PC-9 (cell line): ENCODE measurements at regions of chr3 and their contacts with region 1.

Region 1: GRCh38 chr3:157201648-157202278 is 41.8 kb upstream of the CCNL1 start:
- DNase-seq: peak in 1 of 2 experiments; percentile 68
- H3K4me3 ChIP-seq: no peak overlapping the region
- H3K27ac ChIP-seq: no peak overlapping the region
- H3K4me1 ChIP-seq: no peaks in the 10 kb centered on the region
- H3K27me3 ChIP-seq: no peaks in the 10 kb centered on the region
- CTCF ChIP-seq: peak; percentile 71

Region 2: GRCh38 chr3:155753036-155753639 is 1448.6 kb before region 1 on chr3:
- CTCF ChIA-PET with region 1: no interaction called
- POLR2A ChIA-PET with region 1: interaction called, 3 read pairs
- intact Hi-C with region 1: loop called (anchors 5 kb)
- DNase-seq: no peak
- H3K4me3 ChIP-seq: no peak overlapping the region
- H3K27ac ChIP-seq: no peak overlapping the region
- H3K4me1 ChIP-seq: peaks cover 14% of the 10 kb centered on the region
- H3K27me3 ChIP-seq: no peaks in the 10 kb centered on the region
- CTCF ChIP-seq: peak; percentile 76

Region 3: DNA sequence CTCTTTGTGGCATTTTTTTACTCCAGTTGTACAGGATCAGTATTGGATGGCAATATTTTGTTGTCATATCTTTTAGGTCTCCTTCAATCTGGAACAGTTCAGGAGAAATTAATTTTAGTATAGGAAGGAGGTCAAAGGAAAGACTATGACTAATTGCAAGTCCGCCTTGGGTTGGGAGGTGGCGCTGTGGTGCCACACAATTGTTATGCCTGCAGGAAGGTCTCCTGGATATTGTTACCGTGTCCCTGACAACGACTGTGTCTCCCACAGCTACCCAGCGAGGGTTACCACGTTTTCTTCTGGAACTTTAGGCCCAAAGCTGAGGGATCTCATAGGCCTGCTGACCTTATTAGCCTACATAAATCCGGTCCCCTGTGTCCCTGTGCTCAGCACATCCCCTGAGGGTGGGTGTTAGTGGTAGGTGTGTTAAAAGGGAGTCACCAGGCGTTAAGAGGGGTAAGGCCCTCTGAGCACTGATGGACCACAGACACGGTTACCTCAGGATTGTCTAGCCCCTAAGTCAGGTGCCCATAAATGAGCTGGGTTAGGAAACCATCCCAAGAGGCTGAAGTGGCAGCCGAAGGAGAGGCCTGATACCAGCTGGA is 1049.8 kb before region 1 on chr3:
- CTCF ChIA-PET with region 1: interaction called, 7 read pairs
- POLR2A ChIA-PET with region 1: no interaction called
- intact Hi-C with region 1: loop called (anchors 1 kb)
- DNase-seq: peak; percentile 49 to 62
- H3K4me3 ChIP-seq: no peak overlapping the region
- H3K27ac ChIP-seq: no peak overlapping the region
- H3K4me1 ChIP-seq: no peaks in the 10 kb centered on the region
- H3K27me3 ChIP-seq: no peaks in the 10 kb centered on the region
- CTCF ChIP-seq: peak; percentile 92

Region 4: GRCh38 chr3:157174649-157175498 is 26.9 kb before region 1 on chr3:
- CTCF ChIA-PET with region 1: interaction called, 5 read pairs
- POLR2A ChIA-PET with region 1: interaction called, 7 read pairs
- intact Hi-C with region 1: loop called (anchors 1 kb)
- DNase-seq: peak; percentile 99
- H3K4me3 ChIP-seq: peak overlapping the region; percentile 71
- H3K27ac ChIP-seq: peak overlapping the region; percentile 94
- H3K4me1 ChIP-seq: peaks cover 22% of the 10 kb centered on the region
- H3K27me3 ChIP-seq: no peaks in the 10 kb centered on the region
- CTCF ChIP-seq: no peak

Region 5: DNA sequence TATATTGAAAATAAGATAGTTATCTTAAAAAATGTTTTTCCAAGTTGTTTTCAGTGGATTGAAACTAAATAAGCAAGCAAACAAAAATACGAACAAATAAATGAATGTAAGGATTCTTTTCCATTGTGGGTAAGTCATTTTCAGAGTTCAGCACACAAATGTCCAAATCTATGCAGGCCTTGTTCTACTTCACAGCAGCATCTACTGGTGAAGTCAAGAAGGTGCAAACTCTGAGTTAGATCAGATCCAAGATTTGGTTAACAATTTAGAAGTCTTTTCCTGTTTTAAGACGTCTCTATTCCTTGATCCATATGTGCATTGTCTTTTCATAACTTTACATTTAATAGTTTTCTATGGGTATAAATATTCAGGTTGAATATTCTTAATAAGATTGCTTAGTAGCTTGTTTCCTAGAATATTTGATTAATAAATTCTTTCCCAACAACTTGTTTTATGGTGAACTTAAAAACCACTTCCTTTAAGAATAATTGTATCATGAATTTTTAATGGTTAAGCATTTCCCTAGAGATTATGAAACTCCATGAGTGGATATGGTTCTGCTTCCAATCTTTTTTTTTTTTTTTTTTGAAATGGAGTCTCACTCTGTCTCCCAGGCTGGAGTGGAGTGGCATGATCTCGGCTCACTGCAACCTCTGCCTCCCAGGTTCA is 245.4 kb after region 1 on chr3:
- CTCF ChIA-PET with region 1: interaction called, 7 read pairs
- POLR2A ChIA-PET with region 1: no interaction called
- intact Hi-C with region 1: loop called (anchors 1 kb)
- DNase-seq: no peak
- H3K4me3 ChIP-seq: no peak overlapping the region
- H3K27ac ChIP-seq: no peak overlapping the region
- H3K4me1 ChIP-seq: peaks cover 18% of the 10 kb centered on the region
- H3K27me3 ChIP-seq: no peaks in the 10 kb centered on the region
- CTCF ChIP-seq: peak; percentile 70

Region 6: DNA sequence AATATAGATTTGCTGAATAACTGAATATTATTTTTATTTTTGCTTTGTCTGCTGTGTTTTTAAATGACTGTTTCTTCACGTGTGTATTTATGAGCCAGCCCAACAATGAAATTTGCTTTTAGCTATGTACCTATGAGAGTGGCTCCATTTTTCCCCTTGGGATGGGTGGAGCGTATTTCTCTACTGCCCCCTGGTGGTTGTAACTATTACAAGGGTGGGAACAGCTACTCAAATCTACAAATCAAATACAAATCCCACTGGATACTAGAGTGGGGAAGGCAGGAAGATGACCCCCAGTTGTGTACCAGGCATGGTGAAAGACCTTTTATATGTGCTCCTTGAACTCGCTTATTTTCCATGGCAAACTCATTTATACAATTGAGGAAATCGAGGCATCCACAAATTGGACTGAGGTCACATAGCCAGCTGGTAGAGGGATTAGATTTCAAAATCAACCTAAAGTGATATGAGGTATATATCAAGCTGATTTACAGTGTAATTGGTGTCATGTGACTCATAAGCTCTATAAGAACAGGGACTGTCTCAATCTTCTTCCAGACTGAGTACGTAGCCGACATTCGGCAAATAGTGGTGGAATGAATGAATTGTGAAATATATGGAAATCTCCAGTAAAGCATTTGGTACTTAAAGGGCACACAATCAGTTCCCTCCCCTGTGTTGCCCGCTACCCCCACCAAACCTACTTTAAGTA is 371.0 kb after region 1 on chr3:
- CTCF ChIA-PET with region 1: interaction called, 6 read pairs
- POLR2A ChIA-PET with region 1: no interaction called
- intact Hi-C with region 1: loop called (anchors 1 kb)
- DNase-seq: peak in 1 of 2 experiments; percentile 17
- H3K4me3 ChIP-seq: no peak overlapping the region
- H3K27ac ChIP-seq: no peak overlapping the region
- H3K4me1 ChIP-seq: 0 out of 2 replicates have a peak, but pooled peaks cover 3% of the 10 kb centered on the region
- H3K27me3 ChIP-seq: no peaks in the 10 kb centered on the region
- CTCF ChIP-seq: peak; percentile 91